Psoas muscle (tissue), 8 donors: ENCODE measurements at regions of chr13 and their contacts with region 1.

Region 1: DNA sequence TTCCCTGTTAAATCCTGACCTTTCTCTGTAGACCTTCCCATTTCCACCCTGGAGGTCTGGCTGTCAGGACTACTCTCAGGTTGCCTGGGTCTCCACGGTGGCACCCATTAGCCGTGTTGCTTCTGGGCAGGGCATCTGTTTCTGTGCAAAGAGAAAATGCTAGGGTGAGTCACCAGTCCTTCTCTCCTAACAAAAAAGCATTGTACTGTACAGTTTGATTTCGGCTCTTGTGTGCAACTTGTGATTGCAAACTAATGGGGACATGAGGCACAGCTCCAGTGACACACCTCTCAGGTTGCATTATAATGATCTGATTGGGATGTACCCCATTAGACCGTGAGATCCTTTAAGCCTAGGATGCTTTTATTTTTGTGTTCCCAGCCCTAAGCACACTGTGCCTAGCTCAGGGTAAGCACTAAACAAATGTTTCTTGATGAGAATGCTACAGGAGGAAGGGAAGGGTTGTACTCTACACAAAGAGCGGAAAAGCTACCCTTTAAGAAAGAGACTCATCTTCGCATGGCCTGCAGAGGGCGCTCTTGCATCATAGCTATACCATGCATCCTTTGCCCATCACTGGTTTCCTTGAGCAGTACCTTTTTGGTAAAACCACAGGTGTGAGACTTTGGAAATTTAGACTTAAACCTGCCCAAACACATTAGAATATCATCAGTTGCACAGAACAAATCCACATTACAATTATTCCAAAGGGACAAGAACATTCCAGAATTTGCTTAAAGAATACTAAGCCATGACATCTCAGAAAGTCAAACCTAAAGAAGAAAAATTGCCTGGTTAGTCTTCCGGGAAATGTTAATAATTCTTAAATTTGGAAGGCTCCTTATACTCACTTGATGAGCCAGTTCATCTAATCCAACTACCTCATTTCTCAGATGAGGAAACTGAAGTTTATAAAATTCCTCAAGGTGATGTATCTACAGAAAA is 20.3 kb upstream of the TRIM13 start:
- DNase-seq: peak; percentile 64 to 80
- ATAC-seq: peak; percentile 73 to 92 (median 86)
- H3K4me3 ChIP-seq: no peak overlapping the region
- H3K27ac ChIP-seq: no peak overlapping the region
- H3K4me1 ChIP-seq: no peaks in the 10 kb centered on the region
- H3K27me3 ChIP-seq: no peaks in the 10 kb centered on the region
- CTCF ChIP-seq: peak; percentile 90

Region 2: GRCh38 chr13:50068508-50068907 is 91.9 kb after region 1 on chr13:
- intact Hi-C with region 1: no loop called
- DNase-seq: no peak
- ATAC-seq: no peak
- H3K4me3 ChIP-seq: no peak overlapping the region
- H3K27ac ChIP-seq: no peak overlapping the region
- H3K4me1 ChIP-seq: peaks cover 11% of the 10 kb centered on the region
- H3K27me3 ChIP-seq: no peaks in the 10 kb centered on the region
- CTCF ChIP-seq: no peak

Region 3: GRCh38 chr13:50810998-50811397 is 834.4 kb after region 1 on chr13:
- intact Hi-C with region 1: loop called in 1 of 2 experiments (anchors 10 kb)
- DNase-seq: no peak
- ATAC-seq: no peak
- H3K4me3 ChIP-seq: no peak overlapping the region
- H3K27ac ChIP-seq: no peak overlapping the region
- H3K4me1 ChIP-seq: no peaks in the 10 kb centered on the region
- H3K27me3 ChIP-seq: no peaks in the 10 kb centered on the region
- CTCF ChIP-seq: no peak

Region 4: DNA sequence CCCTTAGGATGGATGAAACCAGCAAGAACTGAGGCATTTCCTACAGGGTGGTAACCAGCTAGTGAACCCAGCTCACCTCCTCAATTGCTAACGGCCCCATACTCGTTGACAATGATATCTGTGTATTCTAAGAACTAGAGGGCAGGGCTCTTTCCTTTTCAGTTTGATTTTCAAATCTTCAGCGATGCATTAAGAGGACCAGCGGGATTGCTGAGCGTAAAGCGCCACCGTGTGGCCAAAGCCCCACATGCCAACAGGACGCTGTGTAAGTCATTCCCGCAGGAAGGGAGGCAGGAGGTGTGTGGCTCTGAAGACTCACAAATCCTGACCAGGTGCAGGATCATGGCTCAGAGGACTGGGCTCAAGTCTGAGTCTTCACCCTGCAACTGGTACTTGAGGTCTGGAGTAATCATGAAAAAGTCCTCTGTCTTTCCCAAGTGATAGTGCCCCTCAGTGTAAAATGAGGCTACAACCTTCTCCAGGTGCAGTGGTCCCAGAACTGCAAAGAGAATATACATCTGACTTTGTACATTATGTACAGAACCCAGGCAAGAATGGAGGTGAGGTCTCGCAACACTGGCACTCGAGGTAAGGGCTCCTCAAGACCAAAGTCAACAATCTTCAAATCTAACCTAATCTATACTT is 1093.5 kb after region 1 on chr13:
- intact Hi-C with region 1: loop called in 1 of 2 experiments (anchors 5 kb)
- DNase-seq: peak; percentile 79 to 86
- ATAC-seq: peak; percentile 72 to 88 (median 82)
- H3K4me3 ChIP-seq: no peak overlapping the region
- H3K27ac ChIP-seq: no peak overlapping the region
- H3K4me1 ChIP-seq: no peaks in the 10 kb centered on the region
- H3K27me3 ChIP-seq: no peaks in the 10 kb centered on the region
- CTCF ChIP-seq: peak; percentile 92